ENCODE measurements at regions of chr11 and their contacts with region 1.

Region 1: GRCh38 chr11:104823638-104824037 is 74.6 kb downstream of the CASP12 start:
- DNase-seq: no peak
- H3K4me3 ChIP-seq: no peak overlapping the region
- H3K27ac ChIP-seq: no peak overlapping the region
- H3K4me1 ChIP-seq: no peaks in the 10 kb centered on the region
- H3K27me3 ChIP-seq: no peaks in the 10 kb centered on the region
- CTCF ChIP-seq: no peak

Region 2: DNA sequence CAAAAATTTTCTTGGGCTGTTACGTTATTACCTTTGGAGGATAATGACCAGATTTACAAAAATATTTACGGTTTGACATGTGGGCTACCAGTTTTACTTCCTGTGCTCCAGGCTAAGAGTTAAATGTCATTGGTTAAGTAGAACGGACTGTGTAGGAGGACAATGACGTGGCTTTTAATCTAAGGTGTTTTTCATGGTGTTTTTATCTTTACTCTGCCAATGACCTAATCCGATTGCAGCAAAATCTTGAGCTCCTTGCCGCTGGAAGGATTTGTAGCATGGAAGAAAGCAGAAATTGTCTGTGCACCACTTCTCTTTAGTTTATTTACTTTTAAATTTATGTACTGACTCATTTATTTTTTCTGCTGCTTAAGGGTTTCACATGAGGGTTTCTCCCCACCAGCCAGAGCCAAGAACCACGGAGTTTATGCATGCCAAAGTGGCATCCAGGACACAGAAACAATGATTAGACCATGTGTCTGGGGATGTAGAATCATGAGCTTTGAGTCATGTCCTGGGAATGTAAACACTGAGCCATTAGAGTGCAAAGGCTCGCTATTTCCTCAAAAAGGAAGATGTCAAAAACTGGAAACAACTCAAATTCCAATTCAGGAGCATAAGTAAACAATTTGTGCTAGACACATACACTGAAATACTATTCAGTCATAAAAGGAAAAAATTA is 223.4 kb after region 1 on chr11:
- CTCF ChIA-PET with region 1: no interaction called
- POLR2A ChIA-PET with region 1: interaction called, 13 read pairs
- intact Hi-C with region 1: no loop called
- DNase-seq: peak; percentile 60 to 94
- H3K4me3 ChIP-seq: peak overlapping the region; percentile 5; the same call in 1 of the 2 replicates
- H3K27ac ChIP-seq: peak overlapping the region; percentile 63
- H3K4me1 ChIP-seq: peaks cover 20% of the 10 kb centered on the region
- H3K27me3 ChIP-seq: no peaks in the 10 kb centered on the region
- CTCF ChIP-seq: no peak